ENCODE measurements at regions of chr2 and their contacts with region 1.

Region 1: DNA sequence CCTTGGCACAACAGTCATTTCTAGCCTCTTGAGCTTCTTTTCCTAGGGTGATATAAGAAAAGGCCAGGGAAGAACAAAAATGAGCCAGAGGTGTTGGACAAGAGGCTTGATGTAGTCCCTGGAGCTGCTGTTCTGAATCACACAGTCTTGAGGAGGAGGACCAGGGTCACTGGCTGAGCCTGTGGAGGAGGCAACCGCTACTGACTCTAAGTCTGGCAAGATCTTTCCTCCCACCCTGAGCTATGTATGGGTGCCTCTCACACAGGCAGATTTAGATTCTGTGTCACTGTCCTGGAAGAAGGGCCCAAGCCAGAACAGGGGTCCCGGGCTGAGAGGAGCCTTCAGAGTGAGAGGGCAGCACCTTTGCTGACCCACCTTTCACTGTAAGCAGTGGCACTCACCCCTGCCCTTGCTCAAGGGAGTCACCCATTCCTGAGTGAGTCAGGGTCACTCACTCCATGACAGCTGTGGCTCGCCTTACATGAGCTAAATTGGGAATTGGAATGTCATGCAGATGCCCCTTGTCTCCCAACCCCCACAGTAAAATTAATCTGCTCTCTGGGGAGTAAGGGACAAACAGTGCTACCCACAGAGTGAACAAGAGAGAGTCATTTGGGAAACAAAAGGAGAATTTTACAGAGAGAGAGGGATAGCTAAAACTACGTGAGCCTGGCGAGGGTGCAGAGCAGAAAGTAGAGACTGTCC is at the start of gene TRIM54:
- DNase-seq: peak; percentile 43 to 73
- H3K4me3 ChIP-seq: peak within 1 kb of the TSS; percentile 29; the same call in 1 of the 2 replicates
- H3K27ac ChIP-seq: peak within 1 kb of the TSS; percentile 70
- H3K4me1 ChIP-seq: peaks cover 37% of the 10 kb centered on the region
- H3K27me3 ChIP-seq: no peaks in the 10 kb centered on the region
- CTCF ChIP-seq: no peak
- total RNA-seq, gene TRIM54: 8.2 and 9.8 TPM in 2 replicates

Region 2: DNA sequence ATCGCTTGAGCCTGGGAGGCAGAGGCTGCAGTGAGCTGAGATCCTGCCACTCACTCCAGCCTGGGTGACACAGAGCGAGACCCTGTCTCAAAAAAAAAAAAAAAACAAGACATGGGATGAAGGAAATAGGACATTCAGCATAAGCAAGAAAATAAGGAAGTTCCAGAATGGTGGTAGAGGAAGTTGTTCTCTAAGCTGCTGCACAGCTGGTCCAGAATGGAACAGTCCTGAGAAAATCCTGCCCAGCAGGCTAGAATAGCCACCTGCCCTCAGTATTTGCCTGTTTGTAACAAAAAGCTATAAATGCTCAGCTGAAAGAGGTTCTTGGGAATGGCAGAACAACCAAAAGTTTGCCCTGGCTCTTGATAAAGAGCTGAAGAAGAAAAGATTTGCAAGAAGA is 322.7 kb before region 1 on chr2:
- CTCF ChIA-PET with region 1: no interaction called
- POLR2A ChIA-PET with region 1: no interaction called
- intact Hi-C with region 1: loop called (anchors 1 kb)
- DNase-seq: no peak
- H3K4me3 ChIP-seq: no peak overlapping the region
- H3K27ac ChIP-seq: no peak overlapping the region
- H3K4me1 ChIP-seq: peaks cover 10% of the 10 kb centered on the region
- H3K27me3 ChIP-seq: peaks cover 14% of the 10 kb centered on the region; the same call in 1 of the 2 replicates
- CTCF ChIP-seq: no peak

Region 3: GRCh38 chr2:27095745-27096651 is 186.0 kb before region 1 on chr2:
- CTCF ChIA-PET with region 1: interaction called, 5 read pairs
- POLR2A ChIA-PET with region 1: no interaction called
- intact Hi-C with region 1: loop called (anchors 2 kb)
- DNase-seq: no peak
- H3K4me3 ChIP-seq: peak overlapping the region; percentile 39; the same call in 1 of the 2 replicates
- H3K27ac ChIP-seq: no peak overlapping the region
- H3K4me1 ChIP-seq: no peaks in the 10 kb centered on the region
- H3K27me3 ChIP-seq: no peaks in the 10 kb centered on the region
- CTCF ChIP-seq: no peak

Region 4: GRCh38 chr2:27211829-27212627 is 70.0 kb before region 1 on chr2 and contains the starts of genes ATRAID and SLC5A6:
- CTCF ChIA-PET with region 1: no interaction called
- POLR2A ChIA-PET with region 1: interaction called, 3 read pairs
- intact Hi-C with region 1: loop called (anchors 5 kb)
- DNase-seq: peak; percentile 77 to 89
- H3K4me3 ChIP-seq: peak within 1 kb of the TSS; percentile 82
- H3K27ac ChIP-seq: peak within 1 kb of the TSS; percentile 82
- H3K4me1 ChIP-seq: peaks cover 36% of the 10 kb centered on the region
- H3K27me3 ChIP-seq: no peaks in the 10 kb centered on the region
- CTCF ChIP-seq: no peak
- total RNA-seq, gene ATRAID: 92.8 and 126 TPM in 2 replicates
- total RNA-seq, gene SLC5A6: 49.0 and 70.0 TPM in 2 replicates

Region 5: GRCh38 chr2:27249891-27250651 is 31.9 kb before region 1 on chr2:
- CTCF ChIA-PET with region 1: interaction called, 3 read pairs
- POLR2A ChIA-PET with region 1: no interaction called
- intact Hi-C with region 1: loop called (anchors 1 kb)
- DNase-seq: peak in 1 of 2 experiments; percentile 50
- H3K4me3 ChIP-seq: no peak overlapping the region
- H3K27ac ChIP-seq: no peak overlapping the region
- H3K4me1 ChIP-seq: no peaks in the 10 kb centered on the region
- H3K27me3 ChIP-seq: no peaks in the 10 kb centered on the region; the same call in 1 of the 2 replicates
- CTCF ChIP-seq: peak; percentile 72